Left ventricle myocardium superior (tissue), 1 donor: ENCODE measurements at regions of chr20 and their contacts with region 1.

Region 1: GRCh38 chr20:1325173-1326030 is 3.5 kb downstream of the SDCBP2 start:
- DNase-seq: peak; percentile 99
- ATAC-seq: peak; percentile 94

Region 2: GRCh38 chr20:1263853-1264252 is 61.5 kb before region 1 on chr20:
- intact Hi-C with region 1: no loop called
- DNase-seq: no peak
- ATAC-seq: no peak

Region 3: GRCh38 chr20:1392823-1393506 is 67.6 kb after region 1 on chr20 and contains the start of gene FKBP1A:
- intact Hi-C with region 1: loop called (anchors 5 kb)
- DNase-seq: peak; percentile 97
- ATAC-seq: peak; percentile 98
- total RNA-seq, gene FKBP1A: 135 TPM

Region 4: GRCh38 chr20:1405801-1406200 is 80.4 kb after region 1 on chr20:
- intact Hi-C with region 1: no loop called
- DNase-seq: no peak
- ATAC-seq: no peak